WTC11 (cell line): ENCODE measurements at regions of chr12 and their contacts with region 1.

Region 1: GRCh38 chr12:32312049-32312670 is 87.2 kb upstream of the FGD4 start:
- DNase-seq: no peak
- ATAC-seq: peak; percentile 60; the same call in 1 of the 2 replicates
- H3K4me3 Mint-ChIP-seq: no peak overlapping the region
- H3K27ac Mint-ChIP-seq: peak overlapping the region; percentile 22
- H3K4me1 Mint-ChIP-seq: peaks cover 19% of the 10 kb centered on the region
- H3K27me3 Mint-ChIP-seq: no peaks in the 10 kb centered on the region
- CTCF ChIP-seq: no peak

Region 2: GRCh38 chr12:31659087-31659933 is 652.9 kb before region 1 on chr12 and contains the start of gene ETFBKMT:
- CTCF ChIA-PET with region 1: interaction called, 27 read pairs
- POLR2A ChIA-PET with region 1: no interaction called
- DNase-seq: peak; percentile 84
- ATAC-seq: peak; percentile 98
- H3K4me3 Mint-ChIP-seq: peak within 1 kb of the TSS; percentile 96
- H3K27ac Mint-ChIP-seq: peak within 1 kb of the TSS; percentile 98
- H3K4me1 Mint-ChIP-seq: peaks cover 8% of the 10 kb centered on the region; the same call in 1 of the 2 replicates
- H3K27me3 Mint-ChIP-seq: no peaks in the 10 kb centered on the region
- CTCF ChIP-seq: no peak
- total RNA-seq, gene ETFBKMT: 2.0 to 2.2 TPM (median 2.1 TPM) in 3 replicates

Region 3: GRCh38 chr12:32061033-32061432 is 251.1 kb before region 1 on chr12:
- CTCF ChIA-PET with region 1: interaction called, 13 read pairs
- POLR2A ChIA-PET with region 1: no interaction called
- DNase-seq: no peak
- ATAC-seq: no peak
- H3K4me3 Mint-ChIP-seq: no peak overlapping the region
- H3K27ac Mint-ChIP-seq: no peak overlapping the region
- H3K4me1 Mint-ChIP-seq: peaks cover 24% of the 10 kb centered on the region
- H3K27me3 Mint-ChIP-seq: no peaks in the 10 kb centered on the region; the same call in 1 of the 2 replicates
- CTCF ChIP-seq: no peak

Region 4: GRCh38 chr12:32242641-32243040 is 69.5 kb before region 1 on chr12:
- CTCF ChIA-PET with region 1: no interaction called
- POLR2A ChIA-PET with region 1: no interaction called
- DNase-seq: no peak
- ATAC-seq: no peak
- H3K4me3 Mint-ChIP-seq: no peak overlapping the region
- H3K27ac Mint-ChIP-seq: peak overlapping the region; percentile 70
- H3K4me1 Mint-ChIP-seq: peaks cover 9% of the 10 kb centered on the region
- H3K27me3 Mint-ChIP-seq: no peaks in the 10 kb centered on the region
- CTCF ChIP-seq: no peak

Region 5: DNA sequence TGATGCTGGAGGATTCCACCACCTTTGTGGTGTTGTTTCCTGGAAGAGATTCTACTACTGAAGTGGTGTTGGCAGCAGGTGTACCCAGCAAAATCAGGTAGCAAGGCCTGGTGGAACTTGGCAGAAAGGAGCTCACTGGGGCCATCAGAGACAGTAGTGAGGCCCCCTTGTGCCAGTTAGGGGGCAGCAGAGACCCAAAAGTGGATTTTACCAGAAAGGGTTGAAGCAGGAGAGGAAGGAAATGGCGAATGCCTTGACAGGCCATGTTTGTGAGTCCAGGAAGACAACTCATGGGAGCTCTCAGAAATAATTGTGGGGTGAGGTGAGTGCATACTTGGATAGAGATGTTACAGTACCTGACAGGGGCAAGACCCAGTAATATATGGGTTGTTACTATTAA is 50.5 kb before region 1 on chr12:
- CTCF ChIA-PET with region 1: interaction called, 19 read pairs
- POLR2A ChIA-PET with region 1: no interaction called
- DNase-seq: peak; percentile 48
- ATAC-seq: peak; percentile 87
- H3K4me3 Mint-ChIP-seq: no peak overlapping the region
- H3K27ac Mint-ChIP-seq: 0 out of 2 replicates have a peak overlapping the region, but pooled peaks have one; percentile 32
- H3K4me1 Mint-ChIP-seq: peaks cover 19% of the 10 kb centered on the region
- H3K27me3 Mint-ChIP-seq: no peaks in the 10 kb centered on the region
- CTCF ChIP-seq: 0 out of 2 replicates have a peak, but pooled peaks have one; percentile 31